GM12878 (cell line): ENCODE measurements at regions of chr20 and their contacts with region 1.

Region 1: GRCh38 chr20:41837669-41838224 is 219.6 kb upstream of the CHD6 start:
- DNase-seq: no peak
- ATAC-seq: no peak
- H3K4me3 ChIP-seq: no peak overlapping the region
- H3K27ac ChIP-seq: no peak overlapping the region
- H3K4me1 ChIP-seq: no peaks in the 10 kb centered on the region
- H3K27me3 ChIP-seq: no peaks in the 10 kb centered on the region
- CTCF ChIP-seq: no peak
- EP300 ChIP-seq: no peak
- POLR2A ChIP-seq: no peak
- RAD21 ChIP-seq: no peak

Region 2: DNA sequence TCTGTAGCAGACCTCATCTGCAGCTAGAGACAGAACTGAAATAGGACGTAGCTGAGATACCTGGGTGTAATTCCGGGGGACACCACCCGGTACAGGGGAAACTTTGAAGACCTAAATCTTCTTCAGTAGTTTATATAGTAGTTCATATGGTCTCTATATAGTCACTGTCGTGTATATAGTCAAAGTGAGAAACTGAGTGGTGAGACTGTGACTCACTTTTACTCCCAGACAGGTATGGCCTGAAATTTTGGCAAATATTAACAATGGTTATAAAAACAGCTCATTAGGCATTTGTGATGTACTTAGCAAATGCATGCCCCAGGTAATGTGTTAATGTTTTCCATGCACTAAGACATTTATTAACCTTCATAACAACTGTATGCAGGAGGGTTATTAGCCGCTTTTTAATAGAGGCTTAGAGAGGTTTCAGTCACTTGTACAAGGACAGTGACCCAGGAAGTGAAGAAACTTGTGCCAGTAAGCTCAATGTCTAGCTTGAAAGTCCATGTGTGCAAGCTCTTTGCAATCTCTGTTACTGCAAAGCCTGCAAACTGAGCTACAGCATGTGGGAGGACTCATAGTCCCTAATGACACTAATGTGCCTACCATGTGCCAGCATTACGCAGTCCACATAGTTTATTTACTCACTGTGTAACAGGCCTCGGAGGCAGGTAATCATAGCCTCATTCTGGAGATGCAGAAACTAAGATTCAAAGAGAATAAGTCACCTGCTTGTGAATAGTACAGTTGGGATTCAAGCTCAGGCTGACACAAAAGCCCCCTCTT is 54.1 kb before region 1 on chr20:
- CTCF ChIA-PET with region 1: no interaction called
- POLR2A ChIA-PET with region 1: no interaction called
- RAD21 ChIA-PET with region 1: no interaction called
- SMC1A ChIA-PET with region 1: no interaction called
- in situ Hi-C with region 1: no loop called
- intact Hi-C with region 1: no loop called
- DNase-seq: peak; percentile 9
- ATAC-seq: peak; percentile 70
- H3K4me3 ChIP-seq: no peak overlapping the region
- H3K27ac ChIP-seq: no peak overlapping the region
- H3K4me1 ChIP-seq: no peaks in the 10 kb centered on the region
- H3K27me3 ChIP-seq: no peaks in the 10 kb centered on the region; a peak in 1 of 4 replicates
- CTCF ChIP-seq: no peak
- EP300 ChIP-seq: no peak
- POLR2A ChIP-seq: no peak
- RAD21 ChIP-seq: no peak

Region 3: GRCh38 chr20:41811456-41811855 is 26.3 kb before region 1 on chr20:
- CTCF ChIA-PET with region 1: no interaction called
- POLR2A ChIA-PET with region 1: no interaction called
- RAD21 ChIA-PET with region 1: no interaction called
- SMC1A ChIA-PET with region 1: no interaction called
- in situ Hi-C with region 1: no loop called
- intact Hi-C with region 1: loop called (anchors 1 kb)
- DNase-seq: no peak
- ATAC-seq: no peak
- H3K4me3 ChIP-seq: no peak overlapping the region
- H3K27ac ChIP-seq: no peak overlapping the region
- H3K4me1 ChIP-seq: no peaks in the 10 kb centered on the region
- H3K27me3 ChIP-seq: no peaks in the 10 kb centered on the region
- CTCF ChIP-seq: no peak
- EP300 ChIP-seq: no peak
- POLR2A ChIP-seq: no peak
- RAD21 ChIP-seq: no peak